MCF 10A (cell line): ENCODE measurements at regions of chr4 and their contacts with region 1.

Region 1: GRCh38 chr4:39697740-39698423 is at the start of gene UBE2K:
- DNase-seq: peak; percentile 90
- H3K4me3 Mint-ChIP-seq: peak within 1 kb of the TSS; percentile 98
- H3K27ac Mint-ChIP-seq: peak within 1 kb of the TSS; percentile 97
- H3K4me1 Mint-ChIP-seq: peaks cover 17% of the 10 kb centered on the region
- H3K27me3 Mint-ChIP-seq: no peaks in the 10 kb centered on the region
- CTCF ChIP-seq: no peak
- total RNA-seq, gene UBE2K: 117 and 121 TPM in 2 replicates

Region 2: DNA sequence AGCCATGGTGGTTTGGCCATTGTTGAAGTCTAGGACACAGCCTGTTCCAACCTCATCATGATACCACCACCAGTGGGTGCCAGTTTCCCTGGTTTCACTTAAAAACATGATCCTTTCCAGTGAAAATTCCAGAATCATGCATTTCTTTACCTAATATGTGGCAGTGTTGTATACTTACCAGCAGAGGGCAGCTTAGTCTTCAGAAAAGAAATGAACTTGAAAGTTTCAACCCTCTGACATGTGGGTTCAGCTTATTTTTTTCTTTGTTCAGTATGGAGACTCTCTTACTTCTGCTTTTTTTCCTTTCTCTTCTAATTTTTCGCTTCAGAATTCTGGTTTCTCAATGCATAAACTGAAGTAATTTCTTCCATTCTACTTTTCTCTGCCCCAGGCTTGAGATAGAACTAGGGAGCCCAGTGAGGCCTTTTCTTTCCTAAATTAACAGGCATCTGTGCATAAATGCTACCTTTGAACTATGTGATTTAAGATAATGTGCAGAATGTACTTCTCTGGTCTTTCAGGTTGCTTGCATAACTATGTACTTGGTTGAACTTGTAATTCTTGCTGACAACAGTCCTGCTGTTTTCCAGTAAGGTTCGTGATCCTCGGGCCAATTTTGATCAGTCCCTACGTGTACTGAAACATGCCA is 228.3 kb before region 1 on chr4:
- CTCF ChIA-PET with region 1: no interaction called
- POLR2A ChIA-PET with region 1: interaction called, 4 read pairs
- intact Hi-C with region 1: loop called (anchors 5 kb)
- DNase-seq: peak; percentile 80
- H3K4me3 Mint-ChIP-seq: no peak overlapping the region
- H3K27ac Mint-ChIP-seq: no peak overlapping the region
- H3K4me1 Mint-ChIP-seq: peaks cover 13% of the 10 kb centered on the region
- H3K27me3 Mint-ChIP-seq: no peaks in the 10 kb centered on the region
- CTCF ChIP-seq: peak; percentile 71

Region 3: GRCh38 chr4:39638354-39639240 is 59.3 kb before region 1 on chr4 and contains the start of gene SMIM14:
- CTCF ChIA-PET with region 1: no interaction called
- POLR2A ChIA-PET with region 1: interaction called, 112 read pairs
- intact Hi-C with region 1: no loop called
- DNase-seq: peak; percentile 98
- H3K4me3 Mint-ChIP-seq: peak within 1 kb of the TSS; percentile 87
- H3K27ac Mint-ChIP-seq: peak within 1 kb of the TSS; percentile 95
- H3K4me1 Mint-ChIP-seq: peaks cover 15% of the 10 kb centered on the region
- H3K27me3 Mint-ChIP-seq: no peaks in the 10 kb centered on the region
- CTCF ChIP-seq: no peak
- total RNA-seq, gene SMIM14: 27.3 and 36.0 TPM in 2 replicates

Region 4: DNA sequence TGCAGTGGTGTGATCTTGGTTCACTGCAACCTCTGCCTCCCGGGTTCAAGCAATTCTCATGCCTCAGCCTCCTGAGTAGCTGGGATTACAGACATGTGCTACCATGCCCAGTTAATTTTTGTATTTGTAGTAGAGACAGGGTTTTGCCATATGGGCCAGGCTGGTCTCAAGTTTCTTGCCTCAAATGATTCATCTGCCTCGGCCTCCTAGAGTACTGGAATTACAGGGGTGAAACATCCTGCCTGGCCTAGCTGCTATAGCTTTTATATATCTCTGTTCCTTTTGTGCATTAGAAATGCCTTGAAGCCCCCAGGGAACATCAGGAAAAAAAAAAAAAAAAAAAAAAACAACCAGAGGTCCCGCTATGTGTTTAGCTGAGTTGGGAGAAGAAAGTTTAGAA is 34.8 kb after region 1 on chr4:
- CTCF ChIA-PET with region 1: interaction called, 4 read pairs
- POLR2A ChIA-PET with region 1: interaction called, 43 read pairs
- intact Hi-C with region 1: no loop called
- DNase-seq: peak; percentile 85
- H3K4me3 Mint-ChIP-seq: no peak overlapping the region
- H3K27ac Mint-ChIP-seq: peak overlapping the region; percentile 67
- H3K4me1 Mint-ChIP-seq: peaks cover 8% of the 10 kb centered on the region
- H3K27me3 Mint-ChIP-seq: no peaks in the 10 kb centered on the region
- CTCF ChIP-seq: no peak

Region 5: GRCh38 chr4:39823191-39823590 is 125.3 kb after region 1 on chr4:
- CTCF ChIA-PET with region 1: interaction called, 3 read pairs
- POLR2A ChIA-PET with region 1: interaction called, 5 read pairs
- intact Hi-C with region 1: loop called (anchors 10 kb)
- DNase-seq: peak; percentile 13
- H3K4me3 Mint-ChIP-seq: no peak overlapping the region
- H3K27ac Mint-ChIP-seq: no peak overlapping the region
- H3K4me1 Mint-ChIP-seq: peaks cover 5% of the 10 kb centered on the region
- H3K27me3 Mint-ChIP-seq: no peaks in the 10 kb centered on the region
- CTCF ChIP-seq: no peak

Region 6: GRCh38 chr4:40056716-40057585 is 359.1 kb after region 1 on chr4 and contains the start of gene N4BP2:
- CTCF ChIA-PET with region 1: interaction called, 5 read pairs
- POLR2A ChIA-PET with region 1: interaction called, 5 read pairs
- intact Hi-C with region 1: loop called (anchors 5 kb)
- DNase-seq: peak; percentile 96
- H3K4me3 Mint-ChIP-seq: peak within 1 kb of the TSS; percentile 78
- H3K27ac Mint-ChIP-seq: peak within 1 kb of the TSS; percentile 93
- H3K4me1 Mint-ChIP-seq: peaks cover 11% of the 10 kb centered on the region
- H3K27me3 Mint-ChIP-seq: no peaks in the 10 kb centered on the region
- CTCF ChIP-seq: peak; percentile 93
- total RNA-seq, gene N4BP2: 8.3 and 8.8 TPM in 2 replicates

Region 7: DNA sequence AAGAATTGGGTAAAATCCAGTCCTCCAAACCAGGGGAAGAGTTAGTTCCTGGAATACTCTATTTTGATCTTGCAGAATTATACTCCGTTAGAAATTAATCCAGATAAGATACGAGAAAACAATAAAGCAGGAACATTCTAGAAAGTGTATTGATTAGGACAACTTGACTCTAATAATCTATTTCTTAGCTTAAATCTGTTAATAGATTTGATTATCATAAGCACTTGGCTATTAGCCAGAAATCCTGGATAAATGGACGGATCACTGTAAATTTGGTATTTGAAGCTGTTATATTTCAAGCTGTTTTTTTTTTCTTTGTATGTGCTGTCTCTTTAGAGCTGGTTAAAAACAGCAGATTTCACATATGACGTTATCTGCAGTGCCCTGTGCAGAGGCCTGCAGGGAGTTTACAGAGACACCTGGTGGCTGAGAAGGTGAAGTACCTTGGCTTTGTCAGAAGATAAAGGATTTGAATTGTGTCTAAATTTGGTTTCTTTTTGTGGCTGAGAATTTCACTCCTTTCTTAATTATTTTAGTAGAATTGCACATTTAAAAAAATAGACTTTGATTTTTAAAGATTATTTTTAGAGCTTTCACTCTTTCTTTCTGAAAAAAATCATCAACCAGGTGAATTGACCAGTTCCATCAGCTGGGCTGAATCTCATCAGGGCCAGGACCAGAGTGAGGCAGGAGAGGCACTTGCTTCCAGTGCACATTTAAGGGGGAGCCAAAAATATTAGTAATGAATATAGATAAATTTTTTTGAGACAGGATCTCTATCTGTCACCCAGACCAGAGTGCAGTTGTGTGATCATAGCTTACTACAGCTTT is 627.5 kb after region 1 on chr4:
- CTCF ChIA-PET with region 1: no interaction called
- POLR2A ChIA-PET with region 1: no interaction called
- intact Hi-C with region 1: loop called (anchors 10 kb)
- DNase-seq: peak; percentile 72
- H3K4me3 Mint-ChIP-seq: no peak overlapping the region
- H3K27ac Mint-ChIP-seq: no peak overlapping the region
- H3K4me1 Mint-ChIP-seq: peaks cover 26% of the 10 kb centered on the region
- H3K27me3 Mint-ChIP-seq: no peaks in the 10 kb centered on the region
- CTCF ChIP-seq: peak; percentile 80